AG04449 (cell line): ENCODE measurements at regions of chr5 and their contacts with region 1.

Region 1: DNA sequence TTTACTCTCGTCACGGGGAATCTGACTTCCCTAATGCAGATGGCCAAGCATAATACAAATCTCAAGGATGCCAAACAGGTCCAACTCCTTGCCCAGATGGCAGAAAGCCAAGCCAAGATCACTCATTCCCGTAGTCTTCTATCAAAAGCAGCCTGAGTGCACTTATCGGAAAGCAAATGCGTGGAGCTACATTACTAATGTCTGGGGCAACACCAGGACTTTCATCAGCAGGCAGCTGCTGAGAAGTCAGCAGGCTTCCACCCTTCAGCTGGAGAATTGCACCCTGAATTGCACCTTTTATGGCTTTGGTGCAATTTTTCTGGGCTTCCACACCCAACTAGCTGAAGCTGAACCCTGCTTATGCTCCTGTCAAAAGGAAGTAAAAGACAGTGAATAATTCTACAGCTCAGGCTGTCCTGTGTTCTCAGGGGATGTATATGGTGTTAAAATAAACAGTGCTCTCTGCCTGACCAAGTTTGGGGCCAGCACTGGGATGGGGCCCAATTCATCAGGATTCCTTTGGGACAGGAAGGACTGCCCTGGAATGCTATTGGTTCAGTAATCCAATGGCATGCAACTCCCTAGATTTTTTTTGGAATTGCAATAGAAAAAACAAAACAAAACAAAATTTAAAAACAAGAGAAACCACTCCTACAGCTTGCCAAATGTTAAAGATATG is 92.6 kb downstream of the DPYSL3 start:
- DNase-seq: no peak
- H3K4me3 ChIP-seq: no peak overlapping the region
- CTCF ChIP-seq: no peak

Region 2: DNA sequence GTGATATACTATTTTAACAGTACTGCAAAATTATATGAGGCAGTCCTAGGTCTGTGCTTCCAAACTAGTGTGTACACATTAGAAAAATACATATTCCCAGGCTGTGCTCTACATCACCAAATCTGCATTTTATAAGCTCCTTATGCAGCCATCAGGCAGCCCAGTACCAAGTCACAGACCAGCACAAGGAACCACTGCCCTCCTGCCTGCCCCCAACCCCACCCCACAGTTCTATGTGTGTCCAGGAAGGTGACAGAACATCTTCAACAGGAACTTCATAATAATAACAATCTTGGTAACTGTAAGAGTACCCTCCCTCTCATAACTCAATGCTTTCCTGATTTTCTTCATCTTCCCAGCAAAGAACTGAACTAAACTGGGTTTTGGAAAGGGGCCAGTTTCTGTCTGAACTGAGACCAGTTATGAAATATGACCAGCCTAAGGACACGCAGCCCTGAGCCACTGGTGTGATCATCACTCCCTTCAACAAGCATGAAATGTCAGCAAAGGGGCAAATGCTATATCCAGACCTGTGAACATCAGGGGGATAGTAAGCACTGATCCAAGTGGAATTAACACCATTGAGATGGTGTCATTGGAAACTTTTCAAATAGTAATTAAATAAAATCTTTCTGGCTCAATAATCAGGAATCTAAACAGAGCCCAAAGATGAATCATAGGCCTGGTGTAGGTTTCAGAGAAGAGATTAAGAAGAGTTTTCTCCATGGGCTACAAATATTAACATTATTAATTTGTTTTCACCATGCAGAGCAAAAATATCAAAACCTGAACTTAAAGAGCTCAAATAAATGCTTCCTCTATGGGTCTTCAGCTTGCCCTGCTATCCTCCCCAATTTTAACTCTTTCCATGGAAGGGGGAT is 10.5 kb after region 1 on chr5:
- CTCF ChIA-PET with region 1: interaction called, 12 read pairs
- POLR2A ChIA-PET with region 1: no interaction called
- DNase-seq: no peak
- H3K4me3 ChIP-seq: no peak overlapping the region
- CTCF ChIP-seq: no peak

Region 3: GRCh38 chr5:147439254-147439653 is 22.0 kb after region 1 on chr5:
- CTCF ChIA-PET with region 1: no interaction called
- POLR2A ChIA-PET with region 1: no interaction called
- DNase-seq: no peak
- H3K4me3 ChIP-seq: no peak overlapping the region
- CTCF ChIP-seq: no peak

Region 4: DNA sequence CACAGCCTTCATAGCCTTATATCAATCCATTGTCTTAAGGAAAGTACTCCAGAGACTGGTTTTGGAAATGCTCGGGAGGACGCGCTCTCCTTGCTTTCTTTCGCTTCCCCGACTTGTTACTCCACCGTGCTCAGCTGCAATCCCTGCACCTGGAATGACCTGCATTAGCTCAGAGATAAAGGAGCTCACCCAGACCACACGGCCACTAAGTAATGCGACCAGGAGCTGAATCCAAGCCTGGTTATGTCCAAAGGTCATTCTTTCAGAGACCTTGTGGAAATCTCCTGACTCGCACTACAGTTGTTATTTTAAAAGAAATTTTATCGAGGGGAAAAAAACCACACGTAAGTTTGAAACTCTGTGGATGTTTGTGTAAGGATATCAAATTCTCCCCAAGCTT is 227.9 kb after region 1 on chr5:
- CTCF ChIA-PET with region 1: no interaction called
- POLR2A ChIA-PET with region 1: no interaction called
- DNase-seq: no peak
- H3K4me3 ChIP-seq: no peak overlapping the region
- CTCF ChIP-seq: no peak